CD4-positive, alpha-beta memory T cell (primary cell): ENCODE measurements at regions of chr19 and their contacts with region 1.

Region 1: DNA sequence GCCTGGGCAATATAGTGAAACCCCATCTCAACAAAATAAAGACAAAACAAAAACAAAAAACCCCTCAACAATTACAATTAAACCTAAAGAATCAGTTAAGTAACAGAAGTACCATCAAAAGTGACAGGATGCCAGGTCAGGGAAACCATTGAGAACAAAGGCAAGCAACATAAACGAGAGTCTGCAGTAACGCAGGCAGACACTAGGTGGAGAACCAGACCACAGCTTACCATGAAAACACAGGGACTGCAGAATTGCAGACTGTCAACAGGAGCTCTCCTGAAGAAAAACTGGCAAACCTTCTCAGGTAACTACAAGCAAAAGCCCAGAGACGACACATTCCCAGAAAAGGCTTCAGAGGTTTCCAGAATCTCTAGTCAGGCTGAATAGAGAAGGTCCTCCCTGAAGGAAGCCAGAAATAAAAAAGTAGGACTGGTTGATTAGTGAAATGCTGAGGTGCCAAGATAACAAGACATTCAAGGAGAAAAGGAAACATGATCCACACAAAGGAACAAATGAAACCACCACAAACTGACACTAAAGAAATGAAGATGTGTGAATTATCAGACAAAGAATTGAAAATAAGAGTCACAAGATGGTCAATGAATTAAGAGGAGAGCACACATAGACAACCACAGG is 2.2 kb upstream of the ZNF665 start:
- DNase-seq: peak; percentile 79 to 82 (median 80)
- H3K4me3 ChIP-seq: no peak overlapping the region
- H3K4me3 Mint-ChIP-seq: peak overlapping the region; percentile 26 to 99 (median 60)
- H3K27ac ChIP-seq: no peak overlapping the region
- H3K27ac Mint-ChIP-seq: peak overlapping the region; percentile 39 to 93 (median 75)
- H3K4me1 ChIP-seq: peaks cover 17% of the 10 kb centered on the region
- H3K4me1 Mint-ChIP-seq: peaks cover 20 to 60% (median 37%) of the 10 kb centered on the region in 4 donors
- H3K27me3 ChIP-seq: no peaks in the 10 kb centered on the region
- H3K27me3 Mint-ChIP-seq: peaks cover 0 to 1% of the 10 kb centered on the region in 2 donors

Region 2: GRCh38 chr19:52637718-52638585 is 557.4 kb before region 1 on chr19 and contains the start of gene ZNF83:
- CTCF ChIA-PET with region 1: no interaction called
- POLR2A ChIA-PET with region 1: no interaction called
- intact Hi-C with region 1: loop called (anchors 5 kb)
- DNase-seq: peak; percentile 85 to 95 (median 92)
- H3K4me3 ChIP-seq: peak within 1 kb of the TSS; percentile 72 to 98
- H3K4me3 Mint-ChIP-seq: peak within 1 kb of the TSS; percentile 91 to 99 (median 97)
- H3K27ac ChIP-seq: peak within 1 kb of the TSS; percentile 87
- H3K27ac Mint-ChIP-seq: peak within 1 kb of the TSS; percentile 90 to 99 (median 98)
- H3K4me1 ChIP-seq: peaks cover 20% of the 10 kb centered on the region
- H3K4me1 Mint-ChIP-seq: peaks cover 10 to 23% (median 16%) of the 10 kb centered on the region in 4 donors
- H3K27me3 ChIP-seq: no peaks in the 10 kb centered on the region
- H3K27me3 Mint-ChIP-seq: no peaks in the 10 kb centered on the region
- total RNA-seq, gene ZNF83: 128 to 130 TPM

Region 3: DNA sequence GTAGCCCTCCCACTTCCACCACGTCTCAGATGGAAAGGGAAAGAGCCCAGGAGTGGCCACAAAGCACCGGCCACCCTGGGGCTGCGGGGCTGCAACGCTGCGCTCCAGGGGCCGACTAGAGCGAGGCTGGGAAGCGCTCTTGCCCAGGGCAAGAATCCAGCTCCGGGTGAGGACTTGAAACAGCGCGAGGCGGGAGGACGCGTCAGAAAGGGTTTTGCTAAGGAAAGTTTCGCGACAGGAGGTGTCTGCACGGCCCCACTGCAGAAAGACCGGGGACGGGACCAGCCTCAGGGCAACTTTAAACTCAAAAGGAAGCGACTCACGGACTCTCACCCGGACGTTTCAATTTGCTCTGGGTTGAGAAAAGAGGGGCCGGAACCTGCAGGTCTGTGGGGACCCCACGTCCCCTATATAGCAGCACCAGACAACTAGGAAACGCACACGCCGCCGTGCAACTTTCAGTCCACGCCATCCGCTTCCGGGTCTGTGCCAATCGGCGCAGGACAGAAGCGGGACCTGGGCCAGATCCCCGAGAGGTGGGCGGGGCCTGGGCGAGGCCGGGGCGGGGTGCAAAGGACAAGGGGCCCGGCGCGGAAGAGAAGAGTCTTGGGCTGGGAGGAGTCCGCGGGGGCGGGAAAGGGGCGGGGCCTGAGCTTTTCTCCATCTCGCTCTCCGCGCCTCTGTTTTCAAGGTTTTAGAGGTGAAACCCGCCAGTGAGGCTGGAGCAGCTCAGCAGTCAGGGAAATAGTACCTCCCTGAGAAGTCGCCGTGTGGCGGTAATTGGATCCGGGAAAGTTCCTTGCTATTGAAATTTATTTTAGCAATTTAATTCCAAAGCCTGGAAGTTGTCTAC is 232.8 kb before region 1 on chr19 and contains the start of gene ZNF816:
- CTCF ChIA-PET with region 1: no interaction called
- POLR2A ChIA-PET with region 1: interaction called, 3 read pairs
- intact Hi-C with region 1: loop called (anchors 10 kb)
- DNase-seq: peak; percentile 97 to 99 (median 97)
- H3K4me3 ChIP-seq: peak within 1 kb of the TSS; percentile 72 to 91
- H3K4me3 Mint-ChIP-seq: peak within 1 kb of the TSS; percentile 90 to 98 (median 93)
- H3K27ac ChIP-seq: peak within 1 kb of the TSS; percentile 51
- H3K27ac Mint-ChIP-seq: peak within 1 kb of the TSS; percentile 89 to 96 (median 92)
- H3K4me1 ChIP-seq: peaks cover 25% of the 10 kb centered on the region
- H3K4me1 Mint-ChIP-seq: peaks cover 13 to 34% (median 24%) of the 10 kb centered on the region in 4 donors
- H3K27me3 ChIP-seq: no peaks in the 10 kb centered on the region
- H3K27me3 Mint-ChIP-seq: peaks cover 0 to 1% of the 10 kb centered on the region in 2 donors
- total RNA-seq, gene ZNF816: 26.1 to 29.6 TPM

Region 4: GRCh38 chr19:53254411-53255341 is 59.3 kb after region 1 on chr19 and contains the start of gene ZNF677:
- CTCF ChIA-PET with region 1: no interaction called
- POLR2A ChIA-PET with region 1: no interaction called
- intact Hi-C with region 1: loop called (anchors 1 kb)
- DNase-seq: peak; percentile 76 to 85 (median 77)
- H3K4me3 ChIP-seq: peak within 1 kb of the TSS; percentile 30 to 54
- H3K4me3 Mint-ChIP-seq: peak within 1 kb of the TSS; percentile 83 to 93 (median 87)
- H3K27ac ChIP-seq: peak within 1 kb of the TSS; percentile 18
- H3K27ac Mint-ChIP-seq: peak within 1 kb of the TSS in 6 of 7 donors; percentile 43 to 83 (median 71)
- H3K4me1 ChIP-seq: no peaks in the 10 kb centered on the region
- H3K4me1 Mint-ChIP-seq: peaks cover 4 to 15% (median 12%) of the 10 kb centered on the region in 4 donors
- H3K27me3 ChIP-seq: no peaks in the 10 kb centered on the region
- H3K27me3 Mint-ChIP-seq: peaks cover 3 to 10% of the 10 kb centered on the region in 2 donors
- total RNA-seq, gene ZNF677: 19.8 to 24.2 TPM

Region 5: DNA sequence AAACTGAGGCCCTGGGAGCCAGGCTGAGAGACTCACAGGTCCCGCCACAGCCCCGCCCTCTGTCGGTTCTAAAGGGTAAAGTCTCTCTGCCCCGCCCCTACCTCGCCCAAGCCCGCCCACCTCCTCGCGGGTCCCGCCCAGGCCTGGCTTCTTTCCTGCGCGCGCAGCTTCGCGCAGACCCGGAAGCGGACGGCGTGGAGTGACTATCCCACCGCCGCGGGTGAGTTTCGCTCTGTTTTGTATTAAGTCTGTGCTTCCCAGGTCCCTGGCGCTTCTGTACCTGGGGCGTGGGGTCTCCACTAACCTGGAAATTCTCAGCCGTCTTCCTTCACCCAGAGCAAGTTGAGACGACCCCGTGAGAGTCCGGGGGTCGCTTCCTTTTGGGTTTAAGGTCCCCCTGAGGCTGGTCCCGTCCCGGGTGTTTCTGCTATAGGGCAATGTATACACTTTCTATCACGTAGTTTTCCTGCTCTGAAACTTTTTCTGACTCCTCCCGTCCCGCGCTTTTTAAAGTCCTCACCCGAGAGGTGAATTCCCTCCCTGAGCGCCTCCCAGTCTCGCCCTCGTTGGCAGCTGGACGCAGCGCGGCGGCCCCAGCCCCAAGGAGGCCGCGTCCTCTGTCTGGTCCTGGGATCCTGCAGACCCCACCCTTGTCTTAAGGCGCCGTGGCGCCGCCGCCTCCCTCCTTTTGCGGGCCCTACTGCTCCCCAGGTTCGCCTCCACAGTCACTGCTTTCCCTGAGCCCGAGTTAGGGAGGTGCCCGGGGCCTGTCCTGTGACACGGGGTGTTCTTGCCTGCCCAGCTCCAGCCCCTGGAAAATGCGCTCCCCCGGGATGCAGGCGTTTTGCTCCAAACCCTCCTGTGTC is 199.8 kb after region 1 on chr19 and contains the start of gene ZNF765:
- CTCF ChIA-PET with region 1: no interaction called
- POLR2A ChIA-PET with region 1: no interaction called
- intact Hi-C with region 1: loop called (anchors 10 kb)
- DNase-seq: peak; percentile 93 to 98 (median 95)
- H3K4me3 ChIP-seq: peak within 1 kb of the TSS; percentile 69 to 70
- H3K4me3 Mint-ChIP-seq: peak within 1 kb of the TSS; percentile 92 to 99 (median 98)
- H3K27ac ChIP-seq: peak within 1 kb of the TSS; percentile 75
- H3K27ac Mint-ChIP-seq: peak within 1 kb of the TSS; percentile 91 to 98 (median 96)
- H3K4me1 ChIP-seq: peaks cover 20% of the 10 kb centered on the region
- H3K4me1 Mint-ChIP-seq: peaks cover 18 to 41% (median 29%) of the 10 kb centered on the region in 4 donors
- H3K27me3 ChIP-seq: no peaks in the 10 kb centered on the region
- H3K27me3 Mint-ChIP-seq: no peaks in the 10 kb centered on the region
- total RNA-seq, gene ZNF765: 20.9 to 21.6 TPM

Region 6: DNA sequence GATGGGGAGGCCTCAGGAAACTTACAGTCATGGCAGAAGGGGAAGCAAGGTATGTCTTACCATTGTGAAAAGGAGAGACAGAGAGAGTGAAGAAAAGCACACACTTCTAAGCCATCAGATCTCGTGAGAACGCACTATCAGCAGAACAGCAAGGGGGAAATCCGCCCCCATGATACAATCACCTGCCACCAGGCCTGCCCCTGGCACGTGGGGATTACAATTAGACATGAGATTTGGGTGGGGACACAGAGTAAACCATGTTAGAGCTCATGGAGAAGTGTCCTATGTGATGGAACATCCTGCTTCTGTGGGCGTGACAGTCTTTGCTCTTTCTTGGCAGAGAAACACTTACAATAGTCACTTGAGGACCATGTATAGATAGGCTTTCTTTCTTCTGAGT is 314.5 kb after region 1 on chr19:
- CTCF ChIA-PET with region 1: interaction called, 10 read pairs
- POLR2A ChIA-PET with region 1: no interaction called
- intact Hi-C with region 1: no loop called
- DNase-seq: no peak
- H3K4me3 ChIP-seq: no peak overlapping the region
- H3K4me3 Mint-ChIP-seq: no peak overlapping the region
- H3K27ac ChIP-seq: no peak overlapping the region
- H3K27ac Mint-ChIP-seq: no peak overlapping the region
- H3K4me1 ChIP-seq: no peaks in the 10 kb centered on the region
- H3K4me1 Mint-ChIP-seq: peaks cover 0 to 2% (median 1%) of the 10 kb centered on the region in 4 donors
- H3K27me3 ChIP-seq: peaks cover 2% of the 10 kb centered on the region
- H3K27me3 Mint-ChIP-seq: peaks cover 0 to 2% of the 10 kb centered on the region in 2 donors

Region 7: GRCh38 chr19:53879140-53880081 is 684.0 kb after region 1 on chr19:
- CTCF ChIA-PET with region 1: no interaction called
- POLR2A ChIA-PET with region 1: no interaction called
- intact Hi-C with region 1: loop called (anchors 5 kb)
- DNase-seq: peak; percentile 72 to 74 (median 73)
- H3K4me3 ChIP-seq: peak overlapping the region; percentile 19 to 53
- H3K4me3 Mint-ChIP-seq: peak overlapping the region in 2 of 8 donors; percentile 73 to 79
- H3K27ac ChIP-seq: no peak overlapping the region
- H3K27ac Mint-ChIP-seq: peak overlapping the region in 5 of 7 donors; percentile 10 to 80 (median 65)
- H3K4me1 ChIP-seq: peaks cover 76% of the 10 kb centered on the region
- H3K4me1 Mint-ChIP-seq: peaks cover 27 to 61% (median 37%) of the 10 kb centered on the region in 4 donors
- H3K27me3 ChIP-seq: peaks cover 40% of the 10 kb centered on the region
- H3K27me3 Mint-ChIP-seq: peaks cover 14 to 17% of the 10 kb centered on the region in 2 donors